ENCODE measurements at regions of chr5 and their contacts with region 1.

Region 1: GRCh38 chr5:64147849-64148441 is 17.7 kb upstream of the RNF180 start:
- DNase-seq: peak; percentile 77 to 90
- ATAC-seq: peak; percentile 75
- H3K4me3 ChIP-seq: no peak overlapping the region
- H3K27ac ChIP-seq: no peak overlapping the region
- H3K4me1 ChIP-seq: peaks cover 0 to 1% of the 10 kb centered on the region in 2 donors
- H3K27me3 ChIP-seq: no peaks in the 10 kb centered on the region

Region 2: DNA sequence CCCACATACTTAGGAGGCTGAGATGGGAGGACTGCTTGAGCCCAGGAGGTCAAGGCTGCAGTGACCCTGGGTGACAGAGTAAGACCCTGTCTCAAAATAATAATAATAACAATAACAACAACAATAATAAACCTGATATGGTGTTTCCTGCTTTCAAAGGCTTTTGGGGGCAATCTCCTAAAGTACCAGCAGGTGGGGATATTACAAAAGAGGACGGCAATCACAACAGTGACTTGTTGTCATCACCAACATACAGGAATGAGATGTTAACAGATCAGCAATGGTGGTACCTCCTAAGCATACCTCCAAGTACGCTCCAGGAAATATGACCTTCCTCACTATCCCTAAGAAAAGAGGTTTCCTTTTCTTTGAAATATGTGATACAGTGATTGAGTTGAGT is 73.4 kb before region 1 on chr5:
- intact Hi-C with region 1: loop called (anchors 5 kb)
- DNase-seq: no peak
- ATAC-seq: no peak
- H3K4me3 ChIP-seq: no peak overlapping the region
- H3K27ac ChIP-seq: no peak overlapping the region
- H3K4me1 ChIP-seq: no peaks in the 10 kb centered on the region
- H3K27me3 ChIP-seq: no peaks in the 10 kb centered on the region

Region 3: GRCh38 chr5:64195981-64196380 is 48.0 kb after region 1 on chr5:
- intact Hi-C with region 1: no loop called
- DNase-seq: no peak
- ATAC-seq: no peak
- H3K4me3 ChIP-seq: no peak overlapping the region
- H3K27ac ChIP-seq: no peak overlapping the region
- H3K4me1 ChIP-seq: peaks cover 0 to 6% of the 10 kb centered on the region in 2 donors
- H3K27me3 ChIP-seq: no peaks in the 10 kb centered on the region

Region 4: GRCh38 chr5:64207978-64208377 is 60.0 kb after region 1 on chr5:
- intact Hi-C with region 1: loop called (anchors 1 to 2 kb)
- DNase-seq: no peak
- ATAC-seq: no peak
- H3K4me3 ChIP-seq: no peak overlapping the region
- H3K27ac ChIP-seq: no peak overlapping the region
- H3K4me1 ChIP-seq: peaks cover 2 to 3% of the 10 kb centered on the region in 2 donors
- H3K27me3 ChIP-seq: no peaks in the 10 kb centered on the region

Region 5: DNA sequence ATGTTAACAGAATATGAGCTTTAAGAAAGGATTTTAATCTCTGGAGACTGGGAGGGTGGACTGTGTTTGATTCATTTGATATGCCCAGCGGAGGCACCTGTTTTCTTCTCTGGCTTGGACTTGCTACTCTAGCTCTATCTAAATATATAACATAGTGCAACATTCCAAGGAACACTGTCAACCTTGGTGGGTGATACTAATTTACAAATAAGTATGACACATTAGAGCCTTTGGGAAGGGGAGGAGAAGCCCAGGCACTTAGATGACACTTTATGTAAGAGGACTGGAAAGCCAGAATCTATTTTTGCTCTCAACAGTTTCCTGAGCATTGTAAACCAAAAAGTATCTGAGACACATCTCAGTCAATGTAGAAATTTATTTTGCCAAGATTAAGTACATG is 459.0 kb after region 1 on chr5:
- intact Hi-C with region 1: loop called (anchors 5 to 10 kb)
- DNase-seq: no peak
- ATAC-seq: no peak
- H3K4me3 ChIP-seq: no peak overlapping the region
- H3K27ac ChIP-seq: no peak overlapping the region
- H3K4me1 ChIP-seq: peaks cover 0 to 7% of the 10 kb centered on the region in 2 donors
- H3K27me3 ChIP-seq: no peaks in the 10 kb centered on the region

Region 6: DNA sequence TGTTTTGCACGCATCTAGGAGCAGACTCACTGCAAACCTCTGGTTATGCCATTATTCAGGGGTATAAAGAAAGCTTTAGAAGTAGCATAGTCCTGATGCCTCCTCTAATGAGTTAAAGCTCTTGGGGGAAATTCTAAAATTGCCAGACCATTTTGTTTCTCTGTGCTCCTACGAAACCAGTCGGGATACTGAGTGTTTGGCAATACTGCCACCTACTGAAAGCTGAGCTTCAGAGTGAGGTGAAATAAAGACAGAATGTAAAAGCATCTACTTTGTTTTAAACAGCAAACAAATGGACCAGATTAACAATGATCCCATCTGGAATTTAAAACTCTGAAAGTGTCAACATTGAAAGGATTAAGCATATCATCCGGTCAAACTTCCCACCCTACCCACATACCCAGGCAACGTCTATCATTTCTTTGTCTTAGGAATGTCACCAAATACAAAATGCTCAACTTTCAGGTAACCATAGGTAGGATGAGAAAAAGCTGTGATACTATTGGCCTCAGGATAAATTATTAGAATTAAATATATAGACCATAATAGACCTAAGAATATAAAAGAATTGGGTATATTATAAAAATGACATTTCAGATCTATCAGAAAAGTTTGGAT is 464.5 kb after region 1 on chr5:
- intact Hi-C with region 1: loop called (anchors 5 to 10 kb)
- DNase-seq: no peak
- ATAC-seq: peak; percentile 81
- H3K4me3 ChIP-seq: no peak overlapping the region
- H3K27ac ChIP-seq: no peak overlapping the region
- H3K4me1 ChIP-seq: peaks cover 0 to 2% of the 10 kb centered on the region in 2 donors
- H3K27me3 ChIP-seq: no peaks in the 10 kb centered on the region

Measured in aorta (tissue), 5 donors.